Ascending aorta (tissue), 2 donors: ENCODE measurements at regions of chr2 and their contacts with region 1.

Region 1: GRCh38 chr2:138373993-138374408 is 127.6 kb upstream of the SPOPL start:
- DNase-seq: no peak
- H3K4me3 ChIP-seq: no peak overlapping the region
- H3K27ac ChIP-seq: no peak overlapping the region
- H3K4me1 ChIP-seq: peaks cover 0 to 5% of the 10 kb centered on the region in 2 donors
- H3K27me3 ChIP-seq: no peaks in the 10 kb centered on the region
- CTCF ChIP-seq: peak; percentile 40 to 66 (median 48)

Region 2: GRCh38 chr2:137910641-137911040 is 463.4 kb before region 1 on chr2:
- intact Hi-C with region 1: loop called (anchors 2 kb)
- DNase-seq: no peak
- H3K4me3 ChIP-seq: no peak overlapping the region
- H3K27ac ChIP-seq: no peak overlapping the region
- H3K4me1 ChIP-seq: no peaks in the 10 kb centered on the region
- H3K27me3 ChIP-seq: no peaks in the 10 kb centered on the region
- CTCF ChIP-seq: peak in 2 of 3 experiments; percentile 64 to 69

Region 3: DNA sequence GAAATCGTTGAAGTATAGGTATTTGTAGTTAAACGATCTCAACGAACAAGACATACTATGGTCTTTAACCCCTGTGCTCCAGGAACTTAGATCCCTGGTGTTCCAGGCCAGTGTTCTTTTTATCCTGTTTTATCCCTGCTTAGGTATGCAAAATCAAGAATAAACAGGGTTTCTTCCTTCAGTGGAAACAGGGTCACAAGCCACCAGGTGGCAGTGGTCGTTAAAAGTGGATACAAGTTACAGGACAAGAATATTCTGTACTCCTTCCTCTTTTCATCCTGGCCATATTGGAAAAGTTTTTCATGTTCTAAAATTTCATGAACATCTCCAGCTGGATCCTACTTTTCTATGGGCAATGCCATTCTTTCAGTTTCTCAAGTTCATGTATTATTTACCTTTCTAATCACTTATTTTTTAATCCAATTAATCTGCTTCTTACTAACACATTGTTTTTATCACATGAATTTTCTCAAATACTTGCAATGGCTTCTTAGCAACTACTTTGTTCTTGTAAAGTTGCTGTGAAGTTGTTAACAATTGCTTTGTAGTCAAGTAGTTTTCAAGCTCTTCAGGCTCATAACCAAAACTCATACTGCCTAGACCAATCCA is 426.2 kb before region 1 on chr2:
- intact Hi-C with region 1: loop called (anchors 5 kb)
- DNase-seq: peak; percentile 15 to 83
- H3K4me3 ChIP-seq: no peak overlapping the region
- H3K27ac ChIP-seq: no peak overlapping the region
- H3K4me1 ChIP-seq: no peaks in the 10 kb centered on the region
- H3K27me3 ChIP-seq: no peaks in the 10 kb centered on the region
- CTCF ChIP-seq: peak; percentile 49 to 68 (median 58)

Region 4: DNA sequence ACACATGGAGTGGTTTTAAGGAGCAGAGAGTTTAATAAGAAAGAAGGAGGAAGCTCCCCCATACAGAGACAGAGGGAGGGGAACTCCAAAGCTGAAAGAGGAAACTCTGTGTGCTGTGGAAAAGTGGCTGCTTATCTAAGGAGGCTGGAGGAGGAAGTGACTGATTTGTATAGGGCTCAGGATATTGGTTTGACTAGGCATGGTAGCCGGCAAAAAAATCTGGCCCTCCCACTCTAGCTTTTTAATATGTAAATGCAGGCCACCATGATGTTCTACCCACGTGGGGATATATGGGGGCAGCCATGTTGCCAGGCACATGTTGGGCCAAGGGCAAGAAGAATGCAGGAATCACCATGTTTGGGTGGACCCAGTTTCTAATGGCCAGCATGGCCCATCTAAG is 345.5 kb before region 1 on chr2:
- intact Hi-C with region 1: loop called (anchors 10 kb)
- DNase-seq: no peak
- H3K4me3 ChIP-seq: no peak overlapping the region
- H3K27ac ChIP-seq: no peak overlapping the region
- H3K4me1 ChIP-seq: peaks cover 0 to 6% of the 10 kb centered on the region in 2 donors
- H3K27me3 ChIP-seq: no peaks in the 10 kb centered on the region
- CTCF ChIP-seq: no peak

Region 5: GRCh38 chr2:138147796-138148195 is 226.2 kb before region 1 on chr2:
- intact Hi-C with region 1: no loop called
- DNase-seq: no peak
- H3K4me3 ChIP-seq: no peak overlapping the region
- H3K27ac ChIP-seq: no peak overlapping the region
- H3K4me1 ChIP-seq: no peaks in the 10 kb centered on the region
- H3K27me3 ChIP-seq: no peaks in the 10 kb centered on the region
- CTCF ChIP-seq: no peak

Region 6: GRCh38 chr2:138501425-138502283 is 127.7 kb after region 1 on chr2 and contains the start of gene SPOPL:
- intact Hi-C with region 1: loop called (anchors 5 kb)
- DNase-seq: peak; percentile 72 to 96
- H3K4me3 ChIP-seq: peak within 1 kb of the TSS; percentile 68 to 90
- H3K27ac ChIP-seq: peak within 1 kb of the TSS; percentile 94 to 96
- H3K4me1 ChIP-seq: peaks cover 0 to 16% of the 10 kb centered on the region in 2 donors
- H3K27me3 ChIP-seq: no peaks in the 10 kb centered on the region
- CTCF ChIP-seq: peak in 2 of 3 experiments; percentile 18 to 26
- total RNA-seq, gene SPOPL: 9.0 TPM

Region 7: DNA sequence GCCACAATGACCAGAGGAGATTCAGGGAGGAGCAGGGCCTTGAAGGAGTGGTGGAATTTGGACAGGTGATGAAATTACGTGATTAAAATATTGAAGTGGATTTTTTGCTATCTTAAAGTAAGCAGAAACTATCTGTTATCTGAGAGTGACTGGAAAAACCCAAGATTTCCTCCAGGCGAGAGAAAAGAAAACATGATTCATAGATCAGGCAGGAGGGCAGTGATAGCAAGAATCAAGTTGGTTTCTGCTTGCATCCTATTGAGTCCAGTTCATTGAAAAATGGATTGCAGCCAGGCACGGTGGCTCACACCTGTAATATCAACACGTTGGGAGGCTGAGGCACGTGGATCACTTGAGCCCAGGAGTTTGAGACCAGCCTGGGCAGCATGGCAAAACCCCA is 278.4 kb after region 1 on chr2:
- intact Hi-C with region 1: no loop called
- DNase-seq: no peak
- H3K4me3 ChIP-seq: no peak overlapping the region
- H3K27ac ChIP-seq: no peak overlapping the region
- H3K4me1 ChIP-seq: no peaks in the 10 kb centered on the region
- H3K27me3 ChIP-seq: no peaks in the 10 kb centered on the region
- CTCF ChIP-seq: no peak

Region 8: DNA sequence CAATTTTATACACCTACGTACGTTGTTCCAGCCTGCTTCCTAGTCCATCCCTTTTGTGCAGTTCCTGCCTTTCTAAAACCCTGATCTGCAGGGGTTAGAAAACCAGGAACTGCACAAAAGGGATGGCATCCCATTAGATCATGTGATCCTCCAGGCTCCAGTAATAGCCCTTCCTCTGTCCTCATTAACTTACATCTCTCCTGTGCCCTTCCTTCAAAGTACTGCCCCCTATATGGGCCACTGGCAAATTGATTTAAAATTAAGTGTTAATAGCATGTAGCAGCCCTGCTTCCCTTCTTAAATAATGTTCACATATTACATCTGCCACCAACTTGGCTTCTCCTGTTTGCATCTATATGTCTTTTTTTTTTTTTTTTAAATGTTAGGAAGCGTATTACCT is 467.5 kb after region 1 on chr2:
- intact Hi-C with region 1: no loop called
- DNase-seq: no peak
- H3K4me3 ChIP-seq: no peak overlapping the region
- H3K27ac ChIP-seq: no peak overlapping the region
- H3K4me1 ChIP-seq: no peaks in the 10 kb centered on the region
- H3K27me3 ChIP-seq: no peaks in the 10 kb centered on the region
- CTCF ChIP-seq: no peak